ENCODE measurements at regions of chr6 and their contacts with region 1.

Region 1: DNA sequence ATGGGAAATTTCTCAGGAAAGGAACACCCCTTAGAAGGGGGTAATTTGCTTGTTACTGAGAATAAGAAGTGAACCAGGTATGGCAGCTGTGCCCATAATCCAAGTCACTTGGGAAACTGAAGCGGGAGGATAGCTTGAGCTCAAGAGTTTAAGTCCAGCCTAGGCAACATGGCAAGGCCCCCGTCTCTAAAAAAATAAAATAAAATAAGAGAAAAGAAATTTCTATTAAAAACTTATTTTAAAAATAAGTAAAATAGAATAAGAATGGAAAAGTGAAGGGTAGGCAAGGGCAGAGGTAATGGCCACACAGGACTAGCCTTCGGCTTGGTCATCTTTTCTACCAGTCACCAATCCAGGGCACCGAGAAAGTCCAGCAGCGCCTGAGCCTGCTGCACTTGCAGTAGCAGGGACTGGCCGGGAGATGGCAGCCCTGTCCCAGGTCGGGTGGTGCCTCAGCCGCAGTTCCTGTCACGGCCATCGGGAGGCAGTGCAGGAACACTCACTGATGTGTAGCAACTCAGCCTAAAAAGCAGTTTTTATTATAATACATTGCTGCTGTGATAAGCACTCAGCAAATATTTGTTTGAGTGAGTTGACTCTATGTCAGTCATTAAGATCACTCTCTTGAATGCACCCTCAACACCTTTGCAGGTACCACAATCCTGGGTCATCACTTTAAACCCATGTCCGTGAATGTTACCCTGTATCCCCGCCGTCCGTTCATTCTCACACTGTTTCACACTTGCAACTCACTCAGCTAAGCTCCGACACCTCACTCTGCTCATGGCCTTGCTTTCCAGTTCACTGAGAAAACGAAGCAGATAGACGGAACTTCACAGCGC is 23.2 kb upstream of the GCM1 start:
- DNase-seq: peak; percentile 37
- ATAC-seq: peak; percentile 90
- H3K4me3 ChIP-seq: no peak overlapping the region
- H3K27ac ChIP-seq: no peak overlapping the region
- H3K4me1 ChIP-seq: no peaks in the 10 kb centered on the region
- H3K27me3 ChIP-seq: no peaks in the 10 kb centered on the region
- CTCF ChIP-seq: peak; percentile 97 to 100 (median 100)
- EP300 ChIP-seq: no peak
- POLR2A ChIP-seq: no peak
- RAD21 ChIP-seq: peak; percentile 100

Region 2: GRCh38 chr6:52834481-52834880 is 337.3 kb before region 1 on chr6:
- CTCF ChIA-PET with region 1: no interaction called
- POLR2A ChIA-PET with region 1: no interaction called
- RAD21 ChIA-PET with region 1: no interaction called
- SMC1A ChIA-PET with region 1: no interaction called
- in situ Hi-C with region 1: no loop called
- intact Hi-C with region 1: no loop called
- DNase-seq: no peak
- ATAC-seq: no peak
- H3K4me3 ChIP-seq: no peak overlapping the region
- H3K27ac ChIP-seq: no peak overlapping the region
- H3K4me1 ChIP-seq: no peaks in the 10 kb centered on the region
- H3K27me3 ChIP-seq: no peaks in the 10 kb centered on the region; a peak in 1 of 4 replicates
- CTCF ChIP-seq: no peak
- EP300 ChIP-seq: no peak
- POLR2A ChIP-seq: no peak
- RAD21 ChIP-seq: no peak

Region 3: GRCh38 chr6:53244958-53245357 is 73.1 kb after region 1 on chr6:
- CTCF ChIA-PET with region 1: interaction called, 3 read pairs
- POLR2A ChIA-PET with region 1: interaction called, 5 read pairs
- RAD21 ChIA-PET with region 1: interaction called, 4 read pairs
- SMC1A ChIA-PET with region 1: interaction called, 3 read pairs
- in situ Hi-C with region 1: no loop called
- intact Hi-C with region 1: loop called (anchors 2 kb)
- DNase-seq: peak; percentile 72
- ATAC-seq: peak; percentile 87
- H3K4me3 ChIP-seq: no peak overlapping the region
- H3K27ac ChIP-seq: no peak overlapping the region
- H3K4me1 ChIP-seq: peaks cover 35% of the 10 kb centered on the region
- H3K27me3 ChIP-seq: no peaks in the 10 kb centered on the region
- CTCF ChIP-seq: no peak
- EP300 ChIP-seq: peak in 1 of 2 experiments; percentile 51; a peak in 1 of 4 replicates
- POLR2A ChIP-seq: no peak
- RAD21 ChIP-seq: no peak

Region 4: GRCh38 chr6:53309059-53309900 is 137.5 kb after region 1 on chr6:
- CTCF ChIA-PET with region 1: interaction called, 10 read pairs
- POLR2A ChIA-PET with region 1: interaction called, 3 read pairs
- RAD21 ChIA-PET with region 1: interaction called, 3 read pairs
- SMC1A ChIA-PET with region 1: interaction called, 6 read pairs
- in situ Hi-C with region 1: no loop called
- intact Hi-C with region 1: no loop called
- DNase-seq: peak; percentile 42
- ATAC-seq: peak; percentile 58
- H3K4me3 ChIP-seq: no peak overlapping the region
- H3K27ac ChIP-seq: peak overlapping the region; percentile 10
- H3K4me1 ChIP-seq: peaks cover 39% of the 10 kb centered on the region
- H3K27me3 ChIP-seq: no peaks in the 10 kb centered on the region
- CTCF ChIP-seq: no peak
- EP300 ChIP-seq: peak in 1 of 2 experiments; percentile 19; a peak in 1 of 4 replicates
- POLR2A ChIP-seq: peak; percentile 28; the same call in 1 of the 2 replicates
- RAD21 ChIP-seq: no peak

Region 5: GRCh38 chr6:53410508-53411258 is 238.9 kb after region 1 on chr6:
- CTCF ChIA-PET with region 1: interaction called, 105 read pairs
- POLR2A ChIA-PET with region 1: interaction called, 3 read pairs
- RAD21 ChIA-PET with region 1: interaction called, 47 read pairs
- SMC1A ChIA-PET with region 1: interaction called, 54 read pairs
- in situ Hi-C with region 1: loop called (anchors 5 kb)
- intact Hi-C with region 1: loop called (anchors 1 kb)
- DNase-seq: peak; percentile 37
- ATAC-seq: peak; percentile 100
- H3K4me3 ChIP-seq: no peak overlapping the region
- H3K27ac ChIP-seq: no peak overlapping the region
- H3K4me1 ChIP-seq: peaks cover 4% of the 10 kb centered on the region; the same call in 1 of the 2 replicates
- H3K27me3 ChIP-seq: no peaks in the 10 kb centered on the region
- CTCF ChIP-seq: peak; percentile 85 to 92 (median 86)
- EP300 ChIP-seq: 0 out of 4 replicates have a peak, but pooled peaks of 1 of the 2 experiments have one; percentile 14
- POLR2A ChIP-seq: no peak
- RAD21 ChIP-seq: peak; percentile 86

Region 6: DNA sequence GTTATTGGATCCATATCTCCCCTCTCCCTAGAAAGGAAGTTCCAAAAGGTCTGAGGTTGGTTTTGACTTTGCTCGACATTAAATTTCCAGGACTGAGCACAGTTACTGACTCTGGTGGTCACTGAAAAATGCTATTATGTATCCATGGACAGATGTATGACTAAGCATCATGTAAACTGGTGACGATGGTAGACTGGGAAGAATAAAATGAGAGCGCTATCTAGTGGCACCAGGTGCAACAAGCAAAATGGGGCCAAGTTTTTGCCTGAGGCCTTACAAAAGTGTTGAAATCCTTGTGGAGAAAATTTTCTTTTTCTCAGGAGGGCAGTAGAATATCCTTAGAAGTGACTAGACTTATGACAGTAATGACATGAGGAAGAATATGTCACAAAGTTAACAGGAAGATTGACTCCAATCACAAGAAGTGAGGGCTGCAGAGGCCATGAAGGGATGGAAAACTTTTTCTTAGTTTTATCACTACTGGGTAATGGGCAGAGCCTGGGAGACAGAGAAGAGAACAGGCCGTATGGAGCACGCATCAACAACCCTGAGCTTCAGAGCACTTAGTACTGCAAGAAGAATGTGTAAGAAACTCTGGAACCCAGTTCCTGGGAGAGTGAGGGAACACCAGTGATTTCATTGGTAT is 265.9 kb after region 1 on chr6:
- CTCF ChIA-PET with region 1: interaction called, 225 read pairs
- POLR2A ChIA-PET with region 1: no interaction called
- RAD21 ChIA-PET with region 1: interaction called, 78 read pairs
- SMC1A ChIA-PET with region 1: interaction called, 110 read pairs
- in situ Hi-C with region 1: no loop called
- intact Hi-C with region 1: loop called (anchors 1 kb)
- DNase-seq: peak; percentile 27
- ATAC-seq: peak; percentile 69
- H3K4me3 ChIP-seq: no peak overlapping the region
- H3K27ac ChIP-seq: no peak overlapping the region
- H3K4me1 ChIP-seq: peaks cover 4% of the 10 kb centered on the region; the same call in 1 of the 2 replicates
- H3K27me3 ChIP-seq: peaks cover 0 to 5% of the 10 kb centered on the region in 2 experiments; a peak in 1 of 4 replicates
- CTCF ChIP-seq: peak; percentile 64 to 77 (median 67)
- EP300 ChIP-seq: no peak
- POLR2A ChIP-seq: no peak
- RAD21 ChIP-seq: peak; percentile 90

Region 7: GRCh38 chr6:53492860-53493634 is 321.2 kb after region 1 on chr6:
- CTCF ChIA-PET with region 1: interaction called, 18 read pairs
- POLR2A ChIA-PET with region 1: no interaction called
- RAD21 ChIA-PET with region 1: interaction called, 4 read pairs
- SMC1A ChIA-PET with region 1: interaction called, 6 read pairs
- in situ Hi-C with region 1: no loop called
- intact Hi-C with region 1: no loop called
- DNase-seq: no peak
- ATAC-seq: peak; percentile 82
- H3K4me3 ChIP-seq: no peak overlapping the region
- H3K27ac ChIP-seq: no peak overlapping the region
- H3K4me1 ChIP-seq: no peaks in the 10 kb centered on the region
- H3K27me3 ChIP-seq: no peaks in the 10 kb centered on the region
- CTCF ChIP-seq: peak; percentile 54 to 73 (median 71); a peak in 5 of 6 replicates
- EP300 ChIP-seq: no peak
- POLR2A ChIP-seq: no peak
- RAD21 ChIP-seq: peak; percentile 79